GM12878 (cell line): ENCODE measurements at regions of chr6 and their contacts with region 1.

Region 1: GRCh38 chr6:31827286-31828079 is at the start of gene HSPA1B:
- DNase-seq: peak; percentile 97
- ATAC-seq: peak; percentile 86
- H3K4me3 ChIP-seq: peak within 1 kb of the TSS; percentile 78
- H3K27ac ChIP-seq: peak within 1 kb of the TSS; percentile 87
- H3K4me1 ChIP-seq: peaks cover 12% of the 10 kb centered on the region
- H3K27me3 ChIP-seq: no peaks in the 10 kb centered on the region
- CTCF ChIP-seq: no peak
- EP300 ChIP-seq: peak in 1 of 2 experiments; percentile 86; a peak in 2 of 4 replicates
- POLR2A ChIP-seq: peak; percentile 95
- RAD21 ChIP-seq: no peak
- polyA plus RNA-seq, gene HSPA1B: 0.11 to 0.33 TPM

Region 2: GRCh38 chr6:31037682-31038081 is 789.8 kb before region 1 on chr6:
- CTCF ChIA-PET with region 1: no interaction called
- POLR2A ChIA-PET with region 1: no interaction called
- RAD21 ChIA-PET with region 1: no interaction called
- SMC1A ChIA-PET with region 1: no interaction called
- in situ Hi-C with region 1: no loop called
- intact Hi-C with region 1: no loop called
- DNase-seq: no peak
- ATAC-seq: no peak
- H3K4me3 ChIP-seq: no peak overlapping the region
- H3K27ac ChIP-seq: no peak overlapping the region
- H3K4me1 ChIP-seq: no peaks in the 10 kb centered on the region
- H3K27me3 ChIP-seq: no peaks in the 10 kb centered on the region; a peak in 2 of 4 replicates
- CTCF ChIP-seq: no peak
- EP300 ChIP-seq: no peak
- POLR2A ChIP-seq: no peak
- RAD21 ChIP-seq: no peak

Region 3: GRCh38 chr6:31332637-31333602 is 494.6 kb before region 1 on chr6:
- CTCF ChIA-PET with region 1: no interaction called
- POLR2A ChIA-PET with region 1: no interaction called
- RAD21 ChIA-PET with region 1: no interaction called
- SMC1A ChIA-PET with region 1: no interaction called
- in situ Hi-C with region 1: no loop called
- intact Hi-C with region 1: no loop called
- DNase-seq: no peak
- ATAC-seq: peak; percentile 86
- H3K4me3 ChIP-seq: no peak overlapping the region
- H3K27ac ChIP-seq: no peak overlapping the region
- H3K4me1 ChIP-seq: no peaks in the 10 kb centered on the region
- H3K27me3 ChIP-seq: no peaks in the 10 kb centered on the region
- CTCF ChIP-seq: no peak
- EP300 ChIP-seq: no peak
- POLR2A ChIP-seq: no peak
- RAD21 ChIP-seq: 0 out of 2 replicates have a peak, but pooled peaks have one; percentile 21

Region 4: GRCh38 chr6:31597006-31597405 is 230.5 kb before region 1 on chr6:
- CTCF ChIA-PET with region 1: interaction called, 16 read pairs
- POLR2A ChIA-PET with region 1: interaction called, 3 read pairs
- RAD21 ChIA-PET with region 1: interaction called, 8 read pairs
- SMC1A ChIA-PET with region 1: interaction called, 5 read pairs
- in situ Hi-C with region 1: no loop called
- intact Hi-C with region 1: no loop called
- DNase-seq: no peak
- ATAC-seq: peak; percentile 84
- H3K4me3 ChIP-seq: no peak overlapping the region
- H3K27ac ChIP-seq: no peak overlapping the region
- H3K4me1 ChIP-seq: peaks cover 18% of the 10 kb centered on the region
- H3K27me3 ChIP-seq: no peaks in the 10 kb centered on the region
- CTCF ChIP-seq: peak; percentile 45 to 64 (median 56)
- EP300 ChIP-seq: no peak
- POLR2A ChIP-seq: no peak
- RAD21 ChIP-seq: peak; percentile 74

Region 5: GRCh38 chr6:31729515-31729978 is 97.9 kb before region 1 on chr6:
- CTCF ChIA-PET with region 1: interaction called, 22 read pairs
- POLR2A ChIA-PET with region 1: interaction called, 158 read pairs
- RAD21 ChIA-PET with region 1: interaction called, 53 read pairs
- SMC1A ChIA-PET with region 1: interaction called, 10 read pairs
- in situ Hi-C with region 1: no loop called
- intact Hi-C with region 1: loop called (anchors 2 kb)
- DNase-seq: peak; percentile 35
- ATAC-seq: peak; percentile 84
- H3K4me3 ChIP-seq: peak overlapping the region; percentile 78
- H3K27ac ChIP-seq: peak overlapping the region; percentile 13; the same call in 1 of the 2 replicates
- H3K4me1 ChIP-seq: peaks cover 33% of the 10 kb centered on the region
- H3K27me3 ChIP-seq: no peaks in the 10 kb centered on the region
- CTCF ChIP-seq: peak in 2 of 3 experiments; percentile 84 to 94; a peak in 3 of 6 replicates
- EP300 ChIP-seq: no peak
- POLR2A ChIP-seq: no peak
- RAD21 ChIP-seq: peak; percentile 90

Region 6: GRCh38 chr6:31776989-31777666 is 50.4 kb before region 1 on chr6 and contains the start of gene VWA7:
- CTCF ChIA-PET with region 1: interaction called, 17 read pairs
- POLR2A ChIA-PET with region 1: interaction called, 4 read pairs
- RAD21 ChIA-PET with region 1: interaction called, 11 read pairs
- SMC1A ChIA-PET with region 1: interaction called, 6 read pairs
- in situ Hi-C with region 1: no loop called
- intact Hi-C with region 1: loop called (anchors 10 kb)
- DNase-seq: peak; percentile 70
- ATAC-seq: peak; percentile 95
- H3K4me3 ChIP-seq: no peak within 1 kb of the TSS
- H3K27ac ChIP-seq: peak within 1 kb of the TSS; percentile 37; the same call in 1 of the 2 replicates
- H3K4me1 ChIP-seq: peaks cover 18% of the 10 kb centered on the region
- H3K27me3 ChIP-seq: no peaks in the 10 kb centered on the region
- CTCF ChIP-seq: no peak
- EP300 ChIP-seq: peak; percentile 33 to 39; a peak in 2 of 4 replicates
- POLR2A ChIP-seq: peak; percentile 72
- RAD21 ChIP-seq: no peak
- polyA plus RNA-seq, gene VWA7: 0.11 TPM in 1 of 2 experiments, not detected in the other

Region 7: GRCh38 chr6:31815025-31815838 is 12.3 kb before region 1 on chr6 and contains the starts of genes HSPA1A and HSPA1L:
- CTCF ChIA-PET with region 1: interaction called, 4 read pairs
- POLR2A ChIA-PET with region 1: interaction called, 91 read pairs
- RAD21 ChIA-PET with region 1: interaction called, 23 read pairs
- SMC1A ChIA-PET with region 1: interaction called, 12 read pairs
- in situ Hi-C with region 1: no loop called
- intact Hi-C with region 1: no loop called
- DNase-seq: no peak
- ATAC-seq: peak; percentile 58
- H3K4me3 ChIP-seq: peak within 1 kb of the TSS; percentile 94
- H3K27ac ChIP-seq: peak within 1 kb of the TSS; percentile 58
- H3K4me1 ChIP-seq: peaks cover 29% of the 10 kb centered on the region
- H3K27me3 ChIP-seq: no peaks in the 10 kb centered on the region
- CTCF ChIP-seq: no peak
- EP300 ChIP-seq: 0 out of 4 replicates have a peak, but pooled peaks of 1 of the 2 experiments have one; percentile 30
- POLR2A ChIP-seq: peak; percentile 81
- RAD21 ChIP-seq: no peak
- polyA plus RNA-seq, gene HSPA1A: 0.29 to 1.3 TPM
- polyA plus RNA-seq, gene HSPA1L: 0.69 TPM